Activated CD4-positive, alpha-beta T cell treated with anti-CD3 and anti-CD28 coated beads for 36 hours (primary cell): ENCODE measurements at regions of chr7 and their contacts with region 1.

Region 1: DNA sequence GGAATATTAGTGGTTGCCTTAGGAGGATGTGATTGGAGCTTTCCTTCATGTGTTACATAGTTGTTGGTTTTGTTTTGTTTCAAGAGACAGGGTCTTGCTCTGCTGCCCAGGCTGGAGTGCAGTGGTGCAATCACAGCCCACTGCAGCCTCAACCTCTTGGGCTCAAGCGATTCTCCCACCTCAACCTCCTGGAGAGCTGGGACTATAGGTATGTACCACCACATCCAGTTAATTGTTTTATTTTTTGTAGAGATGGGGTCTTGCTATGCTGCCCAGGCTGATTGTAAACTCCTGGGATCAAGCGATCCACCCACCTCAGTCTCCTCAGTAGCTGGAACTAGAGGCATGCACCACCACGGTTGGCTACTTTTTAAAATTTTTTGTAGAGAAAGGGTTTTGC is 86.1 kb downstream of the RABGEF1 start:
- DNase-seq: no peak
- ATAC-seq: no peak
- H3K4me3 Mint-ChIP-seq: no peak overlapping the region
- H3K27ac Mint-ChIP-seq: no peak overlapping the region
- H3K4me1 Mint-ChIP-seq: no peaks in the 10 kb centered on the region
- H3K27me3 Mint-ChIP-seq: no peaks in the 10 kb centered on the region

Region 2: GRCh38 chr7:66768865-66769832 is 57.5 kb before region 1 on chr7:
- CTCF ChIA-PET with region 1: no interaction called
- POLR2A ChIA-PET with region 1: no interaction called
- intact Hi-C with region 1: no loop called
- DNase-seq: no peak
- ATAC-seq: no peak
- H3K4me3 Mint-ChIP-seq: no peak overlapping the region
- H3K27ac Mint-ChIP-seq: peak overlapping the region; percentile 49
- H3K4me1 Mint-ChIP-seq: peaks cover 38% of the 10 kb centered on the region
- H3K27me3 Mint-ChIP-seq: no peaks in the 10 kb centered on the region

Region 3: GRCh38 chr7:67006971-67007370 is 180.3 kb after region 1 on chr7:
- CTCF ChIA-PET with region 1: interaction called, 3 read pairs
- POLR2A ChIA-PET with region 1: no interaction called
- intact Hi-C with region 1: loop called in 1 of 2 experiments (anchors 5 kb)
- DNase-seq: no peak
- ATAC-seq: no peak
- H3K4me3 Mint-ChIP-seq: no peak overlapping the region
- H3K27ac Mint-ChIP-seq: no peak overlapping the region
- H3K4me1 Mint-ChIP-seq: peaks cover 3% of the 10 kb centered on the region
- H3K27me3 Mint-ChIP-seq: no peaks in the 10 kb centered on the region

Region 4: DNA sequence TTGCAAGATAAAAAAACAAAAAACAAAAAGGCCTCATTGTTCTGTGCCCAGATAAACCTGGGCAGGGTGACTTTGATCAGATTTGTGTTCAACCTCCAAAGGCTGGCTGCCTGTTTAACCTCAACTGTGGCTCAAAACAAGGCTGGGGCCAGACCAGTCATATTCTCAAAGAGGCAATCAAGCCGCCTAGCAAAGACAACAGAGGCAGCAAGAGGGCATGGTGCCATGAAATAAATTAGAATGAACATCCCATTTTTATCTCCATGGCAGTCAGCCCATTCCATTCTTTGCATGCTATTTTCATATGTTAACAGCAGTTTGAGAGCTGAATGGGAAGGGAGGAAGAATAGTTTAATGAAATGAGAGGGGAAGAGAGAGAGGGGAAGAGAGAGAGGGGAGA is 1320.3 kb after region 1 on chr7:
- CTCF ChIA-PET with region 1: no interaction called
- POLR2A ChIA-PET with region 1: no interaction called
- intact Hi-C with region 1: no loop called
- DNase-seq: no peak
- ATAC-seq: no peak
- H3K4me3 Mint-ChIP-seq: no peak overlapping the region
- H3K27ac Mint-ChIP-seq: no peak overlapping the region
- H3K4me1 Mint-ChIP-seq: no peaks in the 10 kb centered on the region
- H3K27me3 Mint-ChIP-seq: no peaks in the 10 kb centered on the region